Activated B cell treated with CpG ODN at 0.5 μM for 24 hours (primary cell): ENCODE measurements at regions of chr2 and their contacts with region 1.

Region 1: GRCh38 chr2:174078275-174078674 is 113.1 kb upstream of the SP3 start:
- DNase-seq: no peak
- ATAC-seq: no peak
- H3K4me3 Mint-ChIP-seq: no peak overlapping the region
- H3K27ac Mint-ChIP-seq: no peak overlapping the region
- H3K4me1 Mint-ChIP-seq: no peaks in the 10 kb centered on the region
- H3K27me3 Mint-ChIP-seq: no peaks in the 10 kb centered on the region
- CTCF ChIP-seq: no peak

Region 2: GRCh38 chr2:173752152-173752551 is 326.1 kb before region 1 on chr2:
- CTCF ChIA-PET with region 1: no interaction called
- POLR2A ChIA-PET with region 1: no interaction called
- intact Hi-C with region 1: loop called (anchors 10 kb)
- DNase-seq: no peak
- ATAC-seq: no peak
- H3K4me3 Mint-ChIP-seq: no peak overlapping the region
- H3K27ac Mint-ChIP-seq: no peak overlapping the region
- H3K4me1 Mint-ChIP-seq: no peaks in the 10 kb centered on the region
- H3K27me3 Mint-ChIP-seq: peaks cover 5% of the 10 kb centered on the region
- CTCF ChIP-seq: no peak

Region 3: GRCh38 chr2:174062934-174063333 is 15.3 kb before region 1 on chr2:
- CTCF ChIA-PET with region 1: no interaction called
- POLR2A ChIA-PET with region 1: no interaction called
- intact Hi-C with region 1: no loop called
- DNase-seq: no peak
- ATAC-seq: no peak
- H3K4me3 Mint-ChIP-seq: no peak overlapping the region
- H3K27ac Mint-ChIP-seq: no peak overlapping the region
- H3K4me1 Mint-ChIP-seq: peaks cover 4% of the 10 kb centered on the region
- H3K27me3 Mint-ChIP-seq: peaks cover 7% of the 10 kb centered on the region
- CTCF ChIP-seq: no peak

Region 4: GRCh38 chr2:174516501-174517378 is 438.5 kb after region 1 on chr2:
- CTCF ChIA-PET with region 1: no interaction called
- POLR2A ChIA-PET with region 1: no interaction called
- intact Hi-C with region 1: no loop called
- DNase-seq: no peak
- ATAC-seq: peak; percentile 57
- H3K4me3 Mint-ChIP-seq: peak overlapping the region; percentile 3
- H3K27ac Mint-ChIP-seq: peak overlapping the region; percentile 10
- H3K4me1 Mint-ChIP-seq: peaks cover 16% of the 10 kb centered on the region
- H3K27me3 Mint-ChIP-seq: peaks cover 6% of the 10 kb centered on the region
- CTCF ChIP-seq: no peak